HCT116 (cell line): ENCODE measurements at regions of chr2 and their contacts with region 1.

Region 1: DNA sequence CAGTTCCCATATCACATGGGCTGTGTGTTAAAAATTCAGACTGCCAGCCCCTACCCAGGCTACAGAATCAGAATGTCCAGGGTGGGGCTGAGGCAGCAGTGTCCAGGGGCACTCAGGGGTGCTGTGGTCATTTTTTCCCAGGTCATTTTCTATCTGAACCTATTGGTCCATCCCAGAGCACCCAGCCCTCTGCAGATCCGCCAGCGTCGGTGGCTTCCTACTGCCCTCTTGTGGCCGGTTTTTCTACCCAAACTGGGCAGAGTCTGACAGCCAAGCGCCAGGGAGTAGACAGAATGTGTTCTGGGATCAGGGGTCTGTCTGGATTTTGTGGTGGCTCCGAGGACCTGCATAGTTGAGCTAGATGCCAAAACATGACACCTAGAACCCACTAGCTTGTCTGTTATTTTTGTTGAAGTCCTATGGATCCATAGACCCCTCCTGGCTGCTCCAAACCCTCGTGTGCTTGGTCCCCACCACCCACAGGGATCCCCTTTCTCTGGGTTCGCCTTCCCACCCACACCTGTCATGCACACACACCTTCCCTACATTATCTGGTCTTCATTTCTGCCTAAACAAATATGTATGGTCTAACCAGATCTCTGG is 34.1 kb upstream of the RMDN2 start:
- DNase-seq: peak; percentile 48
- ATAC-seq: peak; percentile 100
- H3K4me3 ChIP-seq: no peak overlapping the region
- H3K27ac ChIP-seq: no peak overlapping the region
- H3K4me1 ChIP-seq: no peaks in the 10 kb centered on the region
- H3K27me3 ChIP-seq: no peaks in the 10 kb centered on the region
- CTCF ChIP-seq: peak; percentile 69 to 87 (median 83)
- POLR2A ChIP-seq: no peak
- RAD21 ChIP-seq: peak; percentile 81

Region 2: DNA sequence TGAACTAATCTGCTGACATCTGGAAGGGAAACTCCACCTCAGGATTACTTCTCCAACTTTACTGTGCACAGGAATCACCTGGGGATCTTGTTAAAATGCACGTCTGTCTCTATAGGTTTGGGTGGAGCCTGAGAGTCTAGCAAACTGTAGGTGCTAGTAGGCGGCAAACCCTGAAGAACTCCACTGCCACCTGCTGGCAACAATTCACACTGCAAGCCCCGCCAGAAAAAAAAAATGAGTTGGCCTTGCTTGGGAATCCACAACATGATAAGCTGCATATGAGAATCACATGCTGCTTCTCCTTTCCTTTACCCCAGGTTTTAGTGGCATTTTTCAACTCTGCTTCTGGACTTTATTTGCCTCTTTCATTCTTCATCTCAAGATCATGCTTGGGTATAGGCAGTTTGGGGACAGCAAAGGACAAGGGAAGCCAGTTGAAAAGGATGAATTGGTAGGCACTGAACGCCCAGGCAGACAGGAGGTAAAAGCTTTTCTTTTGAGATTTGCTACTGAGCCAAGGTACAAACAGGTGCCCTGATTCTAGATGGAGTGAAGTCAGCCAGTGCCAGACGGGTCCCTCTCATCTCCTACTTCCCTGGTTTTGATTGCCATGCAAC is 1105.7 kb before region 1 on chr2:
- CTCF ChIA-PET with region 1: no interaction called
- POLR2A ChIA-PET with region 1: no interaction called
- RAD21 ChIA-PET with region 1: no interaction called
- intact Hi-C with region 1: loop called (anchors 5 kb)
- DNase-seq: peak; percentile 62
- ATAC-seq: peak; percentile 94
- H3K4me3 ChIP-seq: no peak overlapping the region
- H3K27ac ChIP-seq: no peak overlapping the region
- H3K4me1 ChIP-seq: 0 out of 4 replicates have a peak, but pooled peaks cover 0 to 3% of the 10 kb centered on the region in 2 experiments
- H3K27me3 ChIP-seq: no peaks in the 10 kb centered on the region; the same call in 1 of the 2 replicates
- CTCF ChIP-seq: peak; percentile 68 to 95 (median 94)
- POLR2A ChIP-seq: no peak
- RAD21 ChIP-seq: peak; percentile 70

Region 3: DNA sequence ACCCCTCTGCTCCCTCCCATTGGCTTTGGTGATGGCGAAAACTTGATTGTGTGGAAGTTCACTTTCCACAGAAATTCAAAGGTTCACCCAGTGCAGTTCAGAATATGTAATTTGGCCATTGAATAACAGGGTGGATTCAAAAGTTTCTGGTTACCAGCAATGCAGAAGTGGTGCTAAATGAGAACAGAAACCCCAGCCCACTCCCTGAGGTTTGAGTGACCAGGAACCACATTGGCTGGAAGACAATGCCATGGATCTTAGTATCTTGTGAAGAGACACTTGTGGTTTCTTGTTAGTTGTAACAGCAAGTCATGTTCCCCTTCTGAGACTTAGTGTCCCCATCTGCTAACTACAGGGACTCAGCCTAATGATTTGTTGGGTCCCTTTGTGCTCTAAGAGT is 496.7 kb before region 1 on chr2:
- CTCF ChIA-PET with region 1: interaction called, 5 read pairs
- POLR2A ChIA-PET with region 1: no interaction called
- RAD21 ChIA-PET with region 1: interaction called in 1 of 2 experiments, 4 read pairs
- intact Hi-C with region 1: loop called (anchors 1 kb)
- DNase-seq: no peak
- ATAC-seq: no peak
- H3K4me3 ChIP-seq: no peak overlapping the region
- H3K27ac ChIP-seq: no peak overlapping the region
- H3K4me1 ChIP-seq: peaks cover 3 to 18% of the 10 kb centered on the region in 2 experiments; a peak in 3 of 4 replicates
- H3K27me3 ChIP-seq: no peaks in the 10 kb centered on the region
- CTCF ChIP-seq: no peak
- POLR2A ChIP-seq: no peak
- RAD21 ChIP-seq: no peak

Region 4: GRCh38 chr2:37776487-37776886 is 114.5 kb before region 1 on chr2:
- CTCF ChIA-PET with region 1: no interaction called
- POLR2A ChIA-PET with region 1: no interaction called
- RAD21 ChIA-PET with region 1: no interaction called
- intact Hi-C with region 1: no loop called
- DNase-seq: peak; percentile 12
- ATAC-seq: peak; percentile 76
- H3K4me3 ChIP-seq: no peak overlapping the region
- H3K27ac ChIP-seq: no peak overlapping the region
- H3K4me1 ChIP-seq: peaks cover 10 to 25% of the 10 kb centered on the region in 2 experiments; a peak in 3 of 4 replicates
- H3K27me3 ChIP-seq: no peaks in the 10 kb centered on the region
- CTCF ChIP-seq: no peak
- POLR2A ChIP-seq: no peak
- RAD21 ChIP-seq: no peak

Region 5: GRCh38 chr2:38115216-38116032 is 224.4 kb after region 1 on chr2:
- CTCF ChIA-PET with region 1: no interaction called
- POLR2A ChIA-PET with region 1: no interaction called
- RAD21 ChIA-PET with region 1: no interaction called
- intact Hi-C with region 1: loop called (anchors 2 kb)
- DNase-seq: peak; percentile 59
- ATAC-seq: peak; percentile 97
- H3K4me3 ChIP-seq: no peak overlapping the region
- H3K27ac ChIP-seq: no peak overlapping the region
- H3K4me1 ChIP-seq: no peaks in the 10 kb centered on the region
- H3K27me3 ChIP-seq: no peaks in the 10 kb centered on the region
- CTCF ChIP-seq: peak; percentile 84 to 99 (median 97)
- POLR2A ChIP-seq: no peak
- RAD21 ChIP-seq: peak; percentile 84

Region 6: DNA sequence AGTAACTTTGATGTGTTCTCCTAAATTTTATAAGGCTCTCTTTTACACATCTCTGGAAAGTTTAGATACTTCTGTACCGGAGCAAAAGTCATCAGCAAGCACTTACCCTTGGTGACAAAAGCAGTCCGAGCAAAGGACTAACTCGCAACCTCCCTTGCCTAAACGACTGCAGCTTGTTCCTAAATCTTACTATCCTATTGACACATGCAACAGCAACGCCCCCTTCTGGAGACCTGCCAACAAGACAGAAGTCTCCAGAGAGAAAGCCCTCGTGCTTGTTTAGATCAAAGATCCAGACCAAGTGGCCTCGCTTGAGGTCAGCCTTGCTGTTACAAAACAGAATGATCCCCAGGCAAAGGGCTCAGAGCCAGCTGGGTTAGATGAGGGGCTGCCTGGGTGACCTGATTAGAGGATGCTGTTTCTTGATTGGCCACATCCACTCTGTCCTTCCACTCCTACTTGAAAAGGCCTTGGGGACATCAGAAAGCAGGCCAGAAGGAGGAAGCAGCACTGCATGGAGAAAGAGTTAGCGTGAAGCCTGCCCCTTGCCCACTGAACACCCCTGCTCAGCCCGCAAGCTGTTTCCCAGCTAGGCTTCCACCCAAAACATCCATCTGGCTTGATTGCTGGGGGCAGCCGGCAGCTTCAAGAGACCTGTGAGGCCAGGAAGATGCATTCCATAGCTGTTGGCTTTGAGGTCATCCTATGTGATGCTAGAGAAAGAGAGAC is 617.5 kb after region 1 on chr2:
- CTCF ChIA-PET with region 1: no interaction called
- POLR2A ChIA-PET with region 1: no interaction called
- RAD21 ChIA-PET with region 1: no interaction called
- intact Hi-C with region 1: loop called (anchors 10 kb)
- DNase-seq: peak; percentile 81
- ATAC-seq: peak; percentile 81
- H3K4me3 ChIP-seq: no peak overlapping the region
- H3K27ac ChIP-seq: no peak overlapping the region
- H3K4me1 ChIP-seq: peaks cover 8 to 17% of the 10 kb centered on the region in 2 experiments; a peak in 3 of 4 replicates
- H3K27me3 ChIP-seq: no peaks in the 10 kb centered on the region
- CTCF ChIP-seq: peak; percentile 37 to 70 (median 69); a peak in 4 of 6 replicates
- POLR2A ChIP-seq: no peak
- RAD21 ChIP-seq: peak; percentile 91